ENCODE measurements at regions of chr16 and their contacts with region 1.

Region 1: DNA sequence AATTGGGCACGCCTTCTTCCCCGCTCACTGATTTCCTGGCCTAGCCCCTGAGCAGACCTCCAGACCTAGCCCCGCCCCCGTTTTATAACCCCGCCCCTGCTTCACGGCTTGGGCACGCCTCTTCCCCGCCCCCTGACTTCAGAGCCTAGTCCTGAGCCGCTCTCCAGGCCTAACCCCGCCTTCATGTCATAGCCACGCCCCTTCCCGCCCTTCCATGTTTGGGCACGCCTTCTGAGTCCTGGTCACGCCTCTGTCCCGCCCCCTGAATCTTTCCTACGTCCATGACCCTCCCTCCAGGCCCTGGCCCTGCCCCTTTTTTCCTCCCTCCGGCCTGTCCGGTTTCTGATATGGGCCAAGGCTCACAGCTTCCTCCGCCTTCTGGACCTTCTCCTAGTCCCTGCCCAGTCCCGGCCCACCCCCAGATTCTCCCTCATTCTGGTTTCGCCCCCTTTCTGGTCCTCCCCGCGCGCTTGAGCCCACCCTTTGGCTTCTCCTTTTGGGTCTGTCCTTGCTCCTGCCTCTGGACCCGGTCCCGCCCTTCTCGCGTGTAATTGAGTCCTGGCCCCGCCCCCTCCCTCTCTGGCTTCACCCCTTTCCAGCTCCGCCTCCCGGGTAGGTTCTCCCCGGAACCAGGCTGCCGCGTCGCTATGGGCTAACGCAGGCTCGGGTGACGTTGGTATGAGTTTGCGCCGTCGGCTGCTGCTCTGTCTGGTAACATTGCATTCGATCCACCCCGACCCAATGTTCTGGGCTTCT is 15.1 kb upstream of the EEF2K start:
- DNase-seq: peak; percentile 99
- H3K4me3 ChIP-seq: peak overlapping the region; percentile 69 to 73
- H3K4me3 Mint-ChIP-seq: peak overlapping the region; percentile 82 to 98 (median 94)
- H3K27ac ChIP-seq: peak overlapping the region; percentile 95
- H3K27ac Mint-ChIP-seq: peak overlapping the region; percentile 99 to 100 (median 100)
- H3K4me1 ChIP-seq: peaks cover 70% of the 10 kb centered on the region
- H3K4me1 Mint-ChIP-seq: peaks cover 47 to 82% (median 62%) of the 10 kb centered on the region in 4 donors
- H3K27me3 ChIP-seq: no peaks in the 10 kb centered on the region
- H3K27me3 Mint-ChIP-seq: peaks cover 2 to 5% of the 10 kb centered on the region in 2 donors

Region 2: GRCh38 chr16:21646721-21647561 is 544.0 kb before region 1 on chr16:
- CTCF ChIA-PET with region 1: interaction called, 7 read pairs
- POLR2A ChIA-PET with region 1: interaction called, 18 read pairs
- intact Hi-C with region 1: no loop called
- DNase-seq: peak; percentile 73 to 89 (median 79)
- H3K4me3 ChIP-seq: peak overlapping the region in 1 of 2 donors; percentile 4
- H3K4me3 Mint-ChIP-seq: peak overlapping the region; percentile 68 to 96 (median 81)
- H3K27ac ChIP-seq: peak overlapping the region; percentile 61
- H3K27ac Mint-ChIP-seq: peak overlapping the region; percentile 91 to 98 (median 95)
- H3K4me1 ChIP-seq: peaks cover 60% of the 10 kb centered on the region
- H3K4me1 Mint-ChIP-seq: peaks cover 32 to 66% (median 49%) of the 10 kb centered on the region in 4 donors
- H3K27me3 ChIP-seq: no peaks in the 10 kb centered on the region
- H3K27me3 Mint-ChIP-seq: no peaks in the 10 kb centered on the region

Region 3: DNA sequence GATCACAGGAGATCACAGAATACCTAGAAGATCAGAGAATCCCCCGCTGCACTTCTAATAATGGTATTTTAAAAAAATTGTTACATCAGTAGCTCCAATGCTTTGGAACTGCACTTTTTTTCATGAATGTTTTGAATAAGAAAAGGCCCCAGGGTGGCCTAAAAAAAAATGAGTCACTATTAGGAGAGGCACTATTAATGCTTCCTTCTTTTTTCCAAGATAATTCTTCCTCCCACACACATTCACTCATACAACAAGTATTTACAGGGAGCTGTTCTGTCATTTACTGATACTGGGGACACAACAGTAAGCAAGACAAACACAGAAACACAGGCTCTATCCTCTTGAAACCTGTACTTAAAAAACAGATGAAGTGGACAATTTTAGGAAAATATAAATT is 189.4 kb before region 1 on chr16:
- CTCF ChIA-PET with region 1: interaction called, 172 read pairs
- POLR2A ChIA-PET with region 1: interaction called, 98 read pairs
- intact Hi-C with region 1: loop called (anchors 1 kb)
- DNase-seq: no peak
- H3K4me3 ChIP-seq: no peak overlapping the region
- H3K4me3 Mint-ChIP-seq: no peak overlapping the region
- H3K27ac ChIP-seq: no peak overlapping the region
- H3K27ac Mint-ChIP-seq: no peak overlapping the region
- H3K4me1 ChIP-seq: peaks cover 9% of the 10 kb centered on the region
- H3K4me1 Mint-ChIP-seq: peaks cover 4 to 18% (median 13%) of the 10 kb centered on the region in 4 donors
- H3K27me3 ChIP-seq: no peaks in the 10 kb centered on the region
- H3K27me3 Mint-ChIP-seq: no peaks in the 10 kb centered on the region

Region 4: DNA sequence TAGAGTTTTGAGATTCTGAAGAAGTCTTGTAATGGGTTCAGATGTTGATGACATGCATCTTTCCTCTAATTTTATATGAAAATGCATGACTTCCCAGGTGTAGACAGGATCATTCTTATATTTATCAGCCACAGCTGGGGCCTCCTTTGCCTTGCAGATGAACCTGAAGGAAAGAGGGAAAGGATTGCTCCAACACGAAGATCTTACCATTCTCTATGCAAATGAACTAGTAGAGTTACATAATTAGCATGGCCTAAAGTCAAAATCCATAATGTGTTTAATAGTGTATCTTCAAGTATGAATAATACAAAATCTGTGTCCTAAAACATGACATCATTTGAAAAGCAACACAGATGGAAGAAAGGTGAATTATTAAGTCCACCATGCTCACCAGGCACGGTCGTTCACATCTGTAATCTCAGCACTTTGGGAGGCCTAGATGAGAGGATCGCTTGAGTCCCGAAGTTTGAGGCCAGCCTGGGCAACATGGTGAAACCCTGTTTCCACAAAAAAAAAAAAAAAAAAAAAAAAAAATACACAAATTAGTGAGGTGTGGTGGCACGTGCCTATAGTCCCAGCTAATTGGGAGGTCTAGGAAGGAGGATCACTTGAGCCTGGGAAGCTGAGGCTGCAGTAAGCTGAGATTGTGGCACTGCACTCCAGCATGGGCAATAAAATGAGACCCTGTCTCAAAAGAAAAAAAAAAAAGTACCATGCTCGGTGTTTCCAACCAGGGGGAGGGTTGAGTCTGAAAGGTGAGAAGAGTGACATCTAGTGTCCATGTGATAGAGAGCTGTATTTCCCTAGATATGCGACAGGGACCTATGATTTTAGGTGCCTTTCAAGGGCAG is 92.3 kb before region 1 on chr16:
- CTCF ChIA-PET with region 1: interaction called, 3 read pairs
- POLR2A ChIA-PET with region 1: interaction called, 7 read pairs
- intact Hi-C with region 1: loop called (anchors 5 kb)
- DNase-seq: peak in 4 of 5 donors; percentile 34 to 54 (median 40)
- H3K4me3 ChIP-seq: no peak overlapping the region
- H3K4me3 Mint-ChIP-seq: peak overlapping the region in 4 of 8 donors; percentile 21 to 70 (median 38)
- H3K27ac ChIP-seq: no peak overlapping the region
- H3K27ac Mint-ChIP-seq: no peak overlapping the region
- H3K4me1 ChIP-seq: no peaks in the 10 kb centered on the region
- H3K4me1 Mint-ChIP-seq: peaks cover 0 to 4% (median 0%) of the 10 kb centered on the region in 4 donors
- H3K27me3 ChIP-seq: no peaks in the 10 kb centered on the region
- H3K27me3 Mint-ChIP-seq: peaks cover 2 to 15% of the 10 kb centered on the region in 2 donors

Region 5: DNA sequence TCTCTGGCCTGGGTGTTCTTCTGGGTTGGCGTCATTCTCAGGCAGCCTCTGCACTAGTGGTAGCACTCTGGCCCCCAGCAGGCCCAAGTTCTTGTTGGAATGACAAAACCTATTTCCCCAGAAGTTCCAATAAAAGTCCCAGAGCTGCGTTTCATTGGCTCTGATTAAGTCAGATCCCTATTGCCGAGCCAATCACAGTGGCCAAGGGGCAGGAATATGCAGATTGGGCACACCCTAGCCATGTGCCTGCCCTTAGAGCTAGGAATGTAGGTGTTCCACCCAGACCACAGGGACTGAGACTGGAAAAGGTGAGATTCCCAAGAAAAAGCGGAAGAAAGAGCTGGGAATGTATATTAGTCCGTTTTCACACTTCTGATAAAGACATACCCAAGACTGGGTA is 61.4 kb after region 1 on chr16:
- CTCF ChIA-PET with region 1: no interaction called
- POLR2A ChIA-PET with region 1: no interaction called
- intact Hi-C with region 1: no loop called
- DNase-seq: no peak
- H3K4me3 ChIP-seq: no peak overlapping the region
- H3K4me3 Mint-ChIP-seq: no peak overlapping the region
- H3K27ac ChIP-seq: no peak overlapping the region
- H3K27ac Mint-ChIP-seq: no peak overlapping the region
- H3K4me1 ChIP-seq: no peaks in the 10 kb centered on the region
- H3K4me1 Mint-ChIP-seq: peaks cover 0 to 4% (median 2%) of the 10 kb centered on the region in 4 donors
- H3K27me3 ChIP-seq: no peaks in the 10 kb centered on the region
- H3K27me3 Mint-ChIP-seq: no peaks in the 10 kb centered on the region

Region 6: GRCh38 chr16:22297114-22297878 is 106.3 kb after region 1 on chr16 and contains the start of gene POLR3E:
- CTCF ChIA-PET with region 1: interaction called, 31 read pairs
- POLR2A ChIA-PET with region 1: interaction called, 196 read pairs
- intact Hi-C with region 1: loop called (anchors 1 kb)
- DNase-seq: peak; percentile 98 to 100 (median 100)
- H3K4me3 ChIP-seq: peak within 1 kb of the TSS; percentile 76 to 91
- H3K4me3 Mint-ChIP-seq: peak within 1 kb of the TSS; percentile 89 to 97 (median 94)
- H3K27ac ChIP-seq: peak within 1 kb of the TSS; percentile 99
- H3K27ac Mint-ChIP-seq: peak within 1 kb of the TSS; percentile 97 to 100 (median 99)
- H3K4me1 ChIP-seq: peaks cover 37% of the 10 kb centered on the region
- H3K4me1 Mint-ChIP-seq: peaks cover 27 to 50% (median 39%) of the 10 kb centered on the region in 4 donors
- H3K27me3 ChIP-seq: no peaks in the 10 kb centered on the region
- H3K27me3 Mint-ChIP-seq: peaks cover 0 to 4% of the 10 kb centered on the region in 2 donors
- total RNA-seq, gene POLR3E: 88.4 to 94.0 TPM

Region 7: GRCh38 chr16:22402191-22402590 is 211.2 kb after region 1 on chr16:
- CTCF ChIA-PET with region 1: no interaction called
- POLR2A ChIA-PET with region 1: no interaction called
- intact Hi-C with region 1: no loop called
- DNase-seq: no peak
- H3K4me3 ChIP-seq: no peak overlapping the region
- H3K4me3 Mint-ChIP-seq: no peak overlapping the region
- H3K27ac ChIP-seq: no peak overlapping the region
- H3K27ac Mint-ChIP-seq: no peak overlapping the region
- H3K4me1 ChIP-seq: no peaks in the 10 kb centered on the region
- H3K4me1 Mint-ChIP-seq: peaks cover 0 to 8% (median 3%) of the 10 kb centered on the region in 4 donors
- H3K27me3 ChIP-seq: no peaks in the 10 kb centered on the region
- H3K27me3 Mint-ChIP-seq: no peaks in the 10 kb centered on the region